Psoas muscle (tissue), 8 donors: ENCODE measurements at regions of chr7 and their contacts with region 1.

Region 1: GRCh38 chr7:149028346-149029109 is at the start of gene PDIA4:
- DNase-seq: peak; percentile 99 to 100
- ATAC-seq: peak; percentile 96 to 99 (median 96)
- H3K4me3 ChIP-seq: peak within 1 kb of the TSS; percentile 81
- H3K27ac ChIP-seq: peak within 1 kb of the TSS; percentile 92
- H3K4me1 ChIP-seq: peaks cover 11% of the 10 kb centered on the region
- H3K27me3 ChIP-seq: no peaks in the 10 kb centered on the region
- CTCF ChIP-seq: peak; percentile 34
- total RNA-seq, gene PDIA4: 11.3 to 17.5 (median 13.8) TPM

Region 2: GRCh38 chr7:148884299-148885022 is 144.1 kb before region 1 on chr7:
- intact Hi-C with region 1: loop called in 1 of 2 experiments (anchors 5 kb)
- DNase-seq: peak; percentile 94 to 96
- ATAC-seq: peak; percentile 98 to 99 (median 99)
- H3K4me3 ChIP-seq: peak overlapping the region; percentile 93
- H3K27ac ChIP-seq: peak overlapping the region; percentile 93
- H3K4me1 ChIP-seq: no peaks in the 10 kb centered on the region
- H3K27me3 ChIP-seq: no peaks in the 10 kb centered on the region
- CTCF ChIP-seq: no peak

Region 3: DNA sequence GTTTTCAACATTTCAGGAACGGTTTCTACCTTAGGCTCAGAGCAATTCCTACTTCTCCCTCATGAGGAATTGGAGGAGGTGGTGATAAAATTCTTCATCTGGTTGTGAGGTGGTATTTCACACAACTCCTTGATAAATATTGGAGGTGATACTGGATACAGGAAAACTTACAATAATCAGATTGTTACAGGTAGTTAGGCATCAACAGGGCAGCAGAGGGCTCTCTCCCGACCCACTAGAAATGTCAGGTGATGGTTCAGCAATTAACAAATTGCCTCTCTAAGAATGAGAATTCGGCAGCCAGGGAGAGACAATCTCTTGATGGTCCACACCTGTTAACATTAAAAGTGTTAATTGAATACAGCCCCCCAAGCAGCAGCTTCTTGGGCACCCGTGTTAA is 39.3 kb after region 1 on chr7:
- intact Hi-C with region 1: loop called in 1 of 2 experiments (anchors 2 kb)
- DNase-seq: no peak
- ATAC-seq: no peak
- H3K4me3 ChIP-seq: no peak overlapping the region
- H3K27ac ChIP-seq: no peak overlapping the region
- H3K4me1 ChIP-seq: no peaks in the 10 kb centered on the region
- H3K27me3 ChIP-seq: no peaks in the 10 kb centered on the region
- CTCF ChIP-seq: no peak

Region 4: DNA sequence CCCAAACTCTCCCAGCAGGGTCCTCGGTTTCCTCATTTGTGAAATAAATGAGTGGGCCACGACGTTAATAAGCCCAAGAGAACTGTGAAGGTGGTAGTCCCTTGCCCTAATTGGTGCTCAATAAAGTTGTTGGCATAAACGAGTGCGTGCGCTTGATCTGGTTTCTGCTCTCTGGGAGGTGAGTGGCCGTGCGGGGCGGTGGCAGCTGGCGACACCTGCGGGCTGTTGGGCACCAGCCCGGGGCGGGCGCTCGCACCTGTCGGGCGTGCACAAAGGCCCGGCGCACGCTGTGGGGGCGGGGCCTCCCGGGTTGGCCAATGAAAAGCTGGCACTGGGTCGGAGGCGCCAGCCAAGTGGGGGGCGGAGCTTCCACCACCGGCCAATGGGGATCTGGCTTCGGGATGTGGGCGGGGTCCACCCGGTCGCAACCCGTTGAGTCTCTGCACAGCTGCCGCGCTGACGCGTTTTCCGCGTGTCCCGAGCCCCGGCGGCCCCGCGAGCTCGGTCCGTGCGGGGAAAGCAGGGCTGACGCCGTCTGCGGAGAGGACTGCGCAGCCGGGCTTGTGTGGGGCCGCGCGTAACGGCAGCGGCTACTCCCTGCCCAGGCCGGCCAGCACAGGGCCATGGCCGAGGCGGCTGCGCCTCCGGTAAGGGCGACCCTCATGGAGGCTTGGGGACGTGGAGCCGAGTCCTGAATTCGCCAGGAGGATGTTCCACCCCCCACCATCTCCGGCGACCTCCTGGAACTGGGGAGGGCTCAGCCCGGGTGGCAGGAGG is 256.5 kb after region 1 on chr7:
- intact Hi-C with region 1: loop called in 1 of 2 experiments (anchors 10 kb)
- DNase-seq: peak; percentile 95 to 98
- ATAC-seq: peak; percentile 98 to 99 (median 99)
- H3K4me3 ChIP-seq: peak overlapping the region; percentile 74
- H3K27ac ChIP-seq: peak overlapping the region; percentile 81
- H3K4me1 ChIP-seq: peaks cover 4% of the 10 kb centered on the region
- H3K27me3 ChIP-seq: no peaks in the 10 kb centered on the region
- CTCF ChIP-seq: no peak